ENCODE measurements at regions of chr4 and their contacts with region 1.

Region 1: GRCh38 chr4:106541253-106541652 is 172.7 kb upstream of the GIMD1 start:
- DNase-seq: peak; percentile 55
- ATAC-seq: peak; percentile 68
- H3K4me3 ChIP-seq: no peak overlapping the region
- H3K27ac ChIP-seq: no peak overlapping the region
- H3K4me1 ChIP-seq: peaks cover 13% of the 10 kb centered on the region
- H3K27me3 ChIP-seq: no peaks in the 10 kb centered on the region
- CTCF ChIP-seq: no peak

Region 2: DNA sequence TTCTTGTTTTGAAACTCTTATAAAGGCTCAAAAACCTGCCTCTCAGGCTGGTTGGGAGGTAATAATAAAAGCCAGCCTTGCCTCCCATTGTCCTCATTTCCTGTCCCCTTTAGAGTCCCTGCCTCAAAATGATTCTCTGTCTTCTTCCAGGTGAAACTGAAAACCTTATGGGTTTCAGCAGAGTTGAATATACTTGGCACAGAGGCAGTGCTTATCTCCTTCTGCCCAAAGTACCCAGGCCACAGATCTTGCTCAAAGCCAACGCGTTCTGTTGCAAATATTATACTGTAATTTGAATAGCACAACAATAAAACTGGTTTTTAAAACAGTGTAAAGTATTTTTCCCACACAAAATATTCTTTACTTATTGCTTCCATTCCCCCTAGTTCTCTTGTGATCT is 10.5 kb after region 1 on chr4:
- CTCF ChIA-PET with region 1: no interaction called
- POLR2A ChIA-PET with region 1: no interaction called
- intact Hi-C with region 1: no loop called
- DNase-seq: no peak
- ATAC-seq: no peak
- H3K4me3 ChIP-seq: no peak overlapping the region
- H3K27ac ChIP-seq: no peak overlapping the region
- H3K4me1 ChIP-seq: no peaks in the 10 kb centered on the region
- H3K27me3 ChIP-seq: no peaks in the 10 kb centered on the region
- CTCF ChIP-seq: no peak

Region 3: DNA sequence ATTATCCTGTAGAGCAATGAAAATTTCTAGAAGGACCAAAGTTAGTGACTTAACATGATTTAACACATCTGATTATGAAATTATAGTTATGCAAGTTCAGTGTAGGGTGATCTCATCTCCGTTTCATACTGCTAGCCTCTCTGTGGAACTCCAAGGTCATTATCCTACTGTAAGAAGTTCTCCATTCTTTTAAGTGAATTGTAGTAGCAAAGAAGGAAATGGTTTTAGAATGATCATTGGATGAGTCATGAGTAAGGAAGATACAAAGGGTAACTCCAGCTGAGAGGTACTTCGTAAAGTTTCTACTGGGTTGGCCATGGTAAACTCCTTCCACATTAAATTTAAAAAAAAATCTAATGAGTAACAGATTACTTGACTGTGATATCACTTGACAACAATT is 42.3 kb after region 1 on chr4:
- CTCF ChIA-PET with region 1: no interaction called
- POLR2A ChIA-PET with region 1: no interaction called
- intact Hi-C with region 1: loop called (anchors 1 kb)
- DNase-seq: peak; percentile 81
- ATAC-seq: peak; percentile 86
- H3K4me3 ChIP-seq: 0 out of 2 replicates have a peak overlapping the region, but pooled peaks have one; percentile 15
- H3K27ac ChIP-seq: peak overlapping the region; percentile 61
- H3K4me1 ChIP-seq: peaks cover 53% of the 10 kb centered on the region
- H3K27me3 ChIP-seq: no peaks in the 10 kb centered on the region
- CTCF ChIP-seq: no peak

Region 4: GRCh38 chr4:106854569-106855351 is 313.5 kb after region 1 on chr4:
- CTCF ChIA-PET with region 1: no interaction called
- POLR2A ChIA-PET with region 1: no interaction called
- intact Hi-C with region 1: no loop called
- DNase-seq: no peak
- ATAC-seq: no peak
- H3K4me3 ChIP-seq: no peak overlapping the region
- H3K27ac ChIP-seq: no peak overlapping the region
- H3K4me1 ChIP-seq: no peaks in the 10 kb centered on the region
- H3K27me3 ChIP-seq: peaks cover 15% of the 10 kb centered on the region
- CTCF ChIP-seq: no peak

Region 5: DNA sequence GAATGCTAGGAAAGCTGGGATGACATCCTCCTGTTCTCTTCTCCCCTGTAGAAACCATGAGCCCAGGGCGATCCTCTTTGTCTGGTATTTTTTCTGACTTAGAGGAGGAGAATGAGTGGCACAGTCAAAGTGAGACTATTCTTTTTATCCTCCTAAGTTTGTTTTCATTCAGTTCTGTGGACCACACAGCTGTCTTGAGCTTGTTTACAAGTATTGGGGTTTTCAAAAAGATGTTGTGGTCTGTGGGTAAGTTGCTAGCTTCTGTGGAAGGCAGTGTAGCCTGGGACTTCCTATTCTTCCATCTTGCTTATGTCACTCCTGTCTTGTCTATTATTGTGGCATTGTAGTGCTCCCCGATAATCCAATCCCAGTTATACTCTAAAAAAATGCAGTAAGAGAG is 955.8 kb after region 1 on chr4:
- CTCF ChIA-PET with region 1: no interaction called
- POLR2A ChIA-PET with region 1: no interaction called
- intact Hi-C with region 1: no loop called
- DNase-seq: no peak
- ATAC-seq: no peak
- H3K4me3 ChIP-seq: no peak overlapping the region
- H3K27ac ChIP-seq: no peak overlapping the region
- H3K4me1 ChIP-seq: no peaks in the 10 kb centered on the region
- H3K27me3 ChIP-seq: peaks cover 5% of the 10 kb centered on the region; the same call in 1 of the 2 replicates
- CTCF ChIP-seq: no peak

Measured in PC-3 (cell line).